Activated naive CD4-positive, alpha-beta T cell treated with anti-CD3 and anti-CD28 coated beads, Interleukin-2, amount 10 ng/mL, durations not matched to agents 7 days and 5 days (primary cell): ENCODE measurements at regions of chr22 and their contacts with region 1.

Region 1: GRCh38 chr22:24325105-24325757 is 54.6 kb downstream of the SPECC1L start:
- DNase-seq: peak; percentile 43
- H3K4me3 Mint-ChIP-seq: peak overlapping the region; percentile 11
- H3K27ac Mint-ChIP-seq: peak overlapping the region; percentile 66
- H3K4me1 Mint-ChIP-seq: peaks cover 50% of the 10 kb centered on the region
- H3K27me3 Mint-ChIP-seq: no peaks in the 10 kb centered on the region

Region 2: GRCh38 chr22:24305260-24305692 is 20.0 kb before region 1 on chr22:
- CTCF ChIA-PET with region 1: no interaction called
- DNase-seq: no peak
- H3K4me3 Mint-ChIP-seq: no peak overlapping the region
- H3K27ac Mint-ChIP-seq: peak overlapping the region; percentile 59
- H3K4me1 Mint-ChIP-seq: peaks cover 57% of the 10 kb centered on the region
- H3K27me3 Mint-ChIP-seq: no peaks in the 10 kb centered on the region

Region 3: GRCh38 chr22:24503137-24503842 is 178.1 kb after region 1 on chr22:
- CTCF ChIA-PET with region 1: interaction called, 11 read pairs
- DNase-seq: peak; percentile 73
- H3K4me3 Mint-ChIP-seq: no peak overlapping the region
- H3K27ac Mint-ChIP-seq: no peak overlapping the region
- H3K4me1 Mint-ChIP-seq: peaks cover 17% of the 10 kb centered on the region
- H3K27me3 Mint-ChIP-seq: peaks cover 48% of the 10 kb centered on the region

Region 4: GRCh38 chr22:24525416-24526037 is 200.3 kb after region 1 on chr22:
- CTCF ChIA-PET with region 1: interaction called, 20 read pairs
- DNase-seq: peak; percentile 91
- H3K4me3 Mint-ChIP-seq: no peak overlapping the region
- H3K27ac Mint-ChIP-seq: no peak overlapping the region
- H3K4me1 Mint-ChIP-seq: peaks cover 8% of the 10 kb centered on the region
- H3K27me3 Mint-ChIP-seq: peaks cover 18% of the 10 kb centered on the region